ENCODE measurements at regions of chr15 and their contacts with region 1.

Region 1: GRCh38 chr15:68795298-68795848 is 25.3 kb downstream of the ANP32A start:
- DNase-seq: peak; percentile 74
- H3K4me3 Mint-ChIP-seq: peak overlapping the region; percentile 14
- H3K27ac Mint-ChIP-seq: peak overlapping the region; percentile 53
- H3K4me1 Mint-ChIP-seq: peaks cover 93% of the 10 kb centered on the region
- H3K27me3 Mint-ChIP-seq: no peaks in the 10 kb centered on the region

Region 2: DNA sequence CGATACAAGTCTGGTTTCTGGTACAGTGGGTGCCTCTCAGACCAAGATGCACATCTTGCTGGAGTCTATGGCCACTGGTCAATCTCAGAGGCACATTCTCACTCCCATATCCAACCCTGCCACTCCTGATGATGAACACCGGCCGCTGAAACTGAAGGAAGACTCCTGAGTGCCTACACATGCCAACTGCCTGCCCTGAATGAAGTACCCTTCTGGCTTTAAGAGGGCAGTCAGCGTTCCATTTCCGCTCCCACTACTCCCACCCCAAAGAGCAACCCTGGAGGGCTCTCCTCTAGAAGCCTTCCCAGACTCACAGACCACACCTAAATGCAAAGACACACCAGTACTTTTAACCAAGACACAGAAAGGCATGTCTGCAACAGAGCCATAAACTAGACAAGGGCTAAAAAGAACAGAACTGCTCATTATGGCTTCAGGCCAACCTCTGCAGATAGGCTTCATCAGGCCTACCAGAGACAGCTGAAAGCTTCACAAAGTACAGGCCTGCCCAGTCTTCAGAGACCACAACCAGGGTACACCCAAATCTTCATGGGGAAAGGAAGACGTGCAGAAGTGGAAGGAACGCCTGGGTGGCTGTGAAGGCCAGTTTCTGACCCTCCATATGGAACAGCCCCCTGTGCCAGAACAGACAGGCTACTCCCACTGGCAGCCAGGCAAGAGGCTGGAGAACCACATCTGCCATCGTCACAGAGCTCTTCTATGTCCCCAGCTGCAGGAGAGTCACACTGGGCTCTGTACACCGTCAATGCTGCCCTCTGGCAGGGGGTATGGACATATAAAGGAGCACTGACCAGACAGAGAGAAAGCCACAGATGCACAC is 11.1 kb after region 1 on chr15:
- CTCF ChIA-PET with region 1: no interaction called
- POLR2A ChIA-PET with region 1: interaction called, 11 read pairs
- DNase-seq: no peak
- H3K4me3 Mint-ChIP-seq: no peak overlapping the region
- H3K27ac Mint-ChIP-seq: no peak overlapping the region
- H3K4me1 Mint-ChIP-seq: peaks cover 51% of the 10 kb centered on the region
- H3K27me3 Mint-ChIP-seq: no peaks in the 10 kb centered on the region